ENCODE measurements at regions of chr15 and their contacts with region 1.

Region 1: DNA sequence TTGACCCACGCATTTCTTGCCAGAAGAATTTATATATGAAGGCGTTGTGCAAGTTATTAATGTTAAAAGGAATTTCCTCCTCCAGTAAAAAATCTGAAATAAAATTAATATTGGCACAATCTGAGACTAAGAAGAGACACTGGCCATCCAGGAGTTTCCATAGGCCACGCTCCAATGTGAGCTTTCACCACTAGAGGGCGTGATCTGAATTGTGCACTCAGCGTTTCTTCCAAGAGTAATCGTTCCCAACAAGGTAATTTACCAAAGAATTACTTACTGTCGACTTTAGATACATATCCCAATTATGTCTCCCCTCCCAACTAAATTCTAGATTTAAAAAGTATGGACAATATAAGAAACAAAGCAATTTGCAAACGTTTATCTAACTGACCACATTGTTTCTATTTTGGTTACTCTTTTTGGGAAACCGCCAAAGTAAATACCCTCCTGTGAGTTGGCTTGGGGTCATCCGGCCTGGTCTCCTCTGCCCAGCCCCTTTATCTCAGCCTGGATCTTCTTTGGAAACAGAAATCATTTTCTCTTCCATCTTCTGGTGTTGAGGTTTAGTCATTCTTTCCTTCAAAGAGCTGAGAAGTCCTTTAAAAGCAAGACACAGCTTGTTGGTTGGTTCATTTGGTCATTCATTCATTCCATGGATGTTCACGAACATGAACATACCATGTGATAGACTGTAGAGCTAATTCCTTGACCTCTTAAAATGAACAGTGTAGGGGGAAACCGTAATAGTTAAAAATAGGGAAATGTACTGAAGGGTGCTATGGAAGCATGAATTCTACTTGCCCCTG is 26.2 kb downstream of the POLR2M start:
- H3K4me3 ChIP-seq: no peak overlapping the region
- H3K27ac ChIP-seq: no peak overlapping the region
- H3K4me1 ChIP-seq: no peaks in the 10 kb centered on the region
- CTCF ChIP-seq: peak; percentile 19; the same call in 1 of the 2 replicates

Region 2: GRCh38 chr15:57720867-57721266 is 11.9 kb before region 1 on chr15:
- CTCF ChIA-PET with region 1: interaction called, 10 read pairs
- POLR2A ChIA-PET with region 1: no interaction called
- H3K4me3 ChIP-seq: no peak overlapping the region
- H3K27ac ChIP-seq: no peak overlapping the region
- H3K4me1 ChIP-seq: no peaks in the 10 kb centered on the region
- CTCF ChIP-seq: no peak

Region 3: GRCh38 chr15:57743424-57743823 is 10.7 kb after region 1 on chr15:
- CTCF ChIA-PET with region 1: interaction called, 19 read pairs
- POLR2A ChIA-PET with region 1: no interaction called
- H3K4me3 ChIP-seq: no peak overlapping the region
- H3K27ac ChIP-seq: no peak overlapping the region
- H3K4me1 ChIP-seq: peaks cover 4% of the 10 kb centered on the region; the same call in 1 of the 2 replicates
- CTCF ChIP-seq: no peak

Measured in HEK293 (cell line).